PC-3 (cell line): ENCODE measurements at regions of chr4 and their contacts with region 1.

Region 1: GRCh38 chr4:148441986-148442831 is at the start of gene NR3C2:
- DNase-seq: peak; percentile 95
- ATAC-seq: peak; percentile 84
- H3K4me3 ChIP-seq: peak within 1 kb of the TSS; percentile 86
- H3K27ac ChIP-seq: no peak within 1 kb of the TSS
- H3K4me1 ChIP-seq: peaks cover 13% of the 10 kb centered on the region; the same call in 1 of the 2 replicates
- H3K27me3 ChIP-seq: no peaks in the 10 kb centered on the region
- CTCF ChIP-seq: no peak
- total RNA-seq, gene NR3C2: 1.2 and 2.8 TPM in 2 replicates

Region 2: DNA sequence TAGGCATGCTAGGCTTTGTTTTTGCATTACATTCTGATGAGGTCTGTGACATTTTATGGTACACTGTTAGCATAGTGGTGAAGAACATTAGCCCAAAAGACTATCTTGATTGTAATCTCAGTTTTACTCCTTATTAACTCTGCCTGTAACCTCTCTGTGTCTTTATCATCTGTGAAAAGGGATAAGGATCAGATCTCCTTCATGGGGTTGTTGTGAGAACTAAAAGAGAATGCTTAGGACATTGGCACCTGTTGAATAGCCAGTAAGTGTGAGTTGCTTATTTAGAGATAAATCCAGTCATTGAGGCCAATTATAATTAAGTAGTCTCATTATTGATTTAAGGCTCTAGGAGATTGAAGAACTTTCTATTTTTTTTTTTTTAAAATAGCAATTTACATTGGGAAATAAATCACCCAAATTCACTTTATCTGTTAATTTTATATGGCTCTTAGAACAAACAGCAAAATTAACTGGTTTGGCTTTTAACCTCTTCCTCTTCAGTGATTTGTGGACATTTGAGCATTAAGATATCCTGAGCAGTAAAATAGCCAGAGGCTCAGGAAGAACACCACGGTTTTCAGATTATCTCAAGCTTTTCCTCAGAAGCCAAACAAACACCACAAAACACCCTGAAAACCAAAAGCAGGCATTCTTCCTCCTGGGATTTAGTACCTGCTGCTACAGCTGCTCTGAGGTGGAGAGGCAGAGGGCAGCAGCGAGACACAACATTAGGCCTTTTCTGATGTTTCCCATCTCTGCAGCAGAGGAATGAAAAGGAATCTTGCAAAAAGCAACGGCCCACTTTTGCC is 517.4 kb before region 1 on chr4:
- CTCF ChIA-PET with region 1: no interaction called
- POLR2A ChIA-PET with region 1: interaction called, 3 read pairs
- intact Hi-C with region 1: loop called (anchors 5 kb)
- DNase-seq: peak; percentile 38
- ATAC-seq: peak; percentile 20
- H3K4me3 ChIP-seq: no peak overlapping the region
- H3K27ac ChIP-seq: no peak overlapping the region
- H3K4me1 ChIP-seq: peaks cover 27% of the 10 kb centered on the region
- H3K27me3 ChIP-seq: no peaks in the 10 kb centered on the region
- CTCF ChIP-seq: peak; percentile 62

Region 3: DNA sequence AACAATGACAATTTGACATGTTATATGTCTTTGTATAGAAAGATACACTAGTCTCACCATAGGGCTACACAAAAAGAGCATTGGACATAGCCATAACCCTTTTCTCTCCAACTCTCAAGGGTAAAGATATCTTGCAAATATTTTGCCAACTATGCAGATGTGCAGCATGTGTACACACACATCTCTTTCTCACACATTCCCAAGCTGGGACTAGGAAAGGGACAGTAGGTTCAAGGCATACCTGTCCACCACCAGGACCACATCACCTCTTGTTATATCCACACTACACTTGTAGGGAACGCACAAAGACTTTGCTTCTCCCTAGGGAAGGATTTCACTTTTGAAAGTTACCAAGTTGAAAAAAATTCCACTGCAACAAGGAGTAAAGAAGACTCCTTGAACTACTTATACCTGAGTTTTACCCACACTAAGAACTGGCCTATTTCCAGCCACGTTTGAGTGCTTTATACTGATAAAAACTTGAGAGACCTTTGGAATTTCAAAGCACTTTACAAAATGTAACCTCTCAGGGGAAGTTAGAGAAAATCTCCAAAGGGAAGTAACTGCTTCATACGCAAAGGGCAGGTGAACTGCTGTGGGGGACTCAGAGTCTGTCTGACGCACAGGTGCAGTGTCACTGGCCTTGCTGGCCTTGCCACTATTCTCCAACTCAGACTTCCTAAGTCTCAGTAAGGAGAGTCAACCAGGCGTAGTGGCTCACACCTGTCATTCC is 36.9 kb before region 1 on chr4:
- CTCF ChIA-PET with region 1: no interaction called
- POLR2A ChIA-PET with region 1: no interaction called
- intact Hi-C with region 1: no loop called
- DNase-seq: no peak
- ATAC-seq: no peak
- H3K4me3 ChIP-seq: no peak overlapping the region
- H3K27ac ChIP-seq: no peak overlapping the region
- H3K4me1 ChIP-seq: no peaks in the 10 kb centered on the region
- H3K27me3 ChIP-seq: no peaks in the 10 kb centered on the region
- CTCF ChIP-seq: no peak

Region 4: DNA sequence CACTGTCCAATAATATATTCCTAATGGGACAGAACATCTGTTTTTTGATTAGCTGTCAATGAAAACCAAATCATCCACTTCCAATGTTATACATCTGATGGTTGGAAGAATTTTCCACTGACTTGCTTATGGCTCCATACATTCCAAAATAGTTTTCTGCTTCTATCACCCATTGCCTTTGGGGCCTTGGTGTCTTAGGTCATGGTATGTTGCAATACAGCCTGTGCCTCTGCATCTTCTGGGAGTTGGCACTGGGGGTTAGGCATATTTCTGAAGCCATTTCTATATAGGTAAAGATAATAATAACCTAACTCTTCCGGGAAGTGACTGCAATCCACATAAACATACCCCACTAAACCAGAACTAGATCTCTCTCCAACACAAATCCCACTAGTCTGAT is 53.3 kb after region 1 on chr4:
- CTCF ChIA-PET with region 1: no interaction called
- POLR2A ChIA-PET with region 1: no interaction called
- intact Hi-C with region 1: no loop called
- DNase-seq: no peak
- ATAC-seq: no peak
- H3K4me3 ChIP-seq: no peak overlapping the region
- H3K27ac ChIP-seq: no peak overlapping the region
- H3K4me1 ChIP-seq: no peaks in the 10 kb centered on the region
- H3K27me3 ChIP-seq: no peaks in the 10 kb centered on the region
- CTCF ChIP-seq: no peak

Region 5: DNA sequence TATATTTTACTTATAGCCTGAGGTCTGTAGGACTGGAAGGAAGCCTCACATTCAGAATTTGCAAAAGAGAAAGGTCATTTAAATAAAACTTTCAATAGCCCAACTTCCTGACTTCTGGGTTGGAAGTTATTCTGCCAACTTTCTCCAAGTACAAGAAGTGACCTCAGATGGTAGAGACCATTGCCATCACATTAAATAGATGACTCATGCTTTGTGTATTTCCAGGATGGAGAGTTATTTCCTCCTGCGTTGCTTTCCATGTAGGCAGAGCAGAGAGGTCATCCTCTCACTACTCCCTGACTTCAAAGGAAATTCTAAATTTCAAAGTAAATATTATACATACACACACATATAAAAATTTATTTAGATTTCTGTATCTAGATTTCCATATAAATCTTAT is 73.0 kb after region 1 on chr4:
- CTCF ChIA-PET with region 1: no interaction called
- POLR2A ChIA-PET with region 1: no interaction called
- intact Hi-C with region 1: loop called (anchors 1 kb)
- DNase-seq: peak; percentile 88
- ATAC-seq: peak; percentile 90
- H3K4me3 ChIP-seq: peak overlapping the region; percentile 3; the same call in 1 of the 2 replicates
- H3K27ac ChIP-seq: peak overlapping the region; percentile 89
- H3K4me1 ChIP-seq: peaks cover 35% of the 10 kb centered on the region
- H3K27me3 ChIP-seq: no peaks in the 10 kb centered on the region
- CTCF ChIP-seq: no peak

Region 6: DNA sequence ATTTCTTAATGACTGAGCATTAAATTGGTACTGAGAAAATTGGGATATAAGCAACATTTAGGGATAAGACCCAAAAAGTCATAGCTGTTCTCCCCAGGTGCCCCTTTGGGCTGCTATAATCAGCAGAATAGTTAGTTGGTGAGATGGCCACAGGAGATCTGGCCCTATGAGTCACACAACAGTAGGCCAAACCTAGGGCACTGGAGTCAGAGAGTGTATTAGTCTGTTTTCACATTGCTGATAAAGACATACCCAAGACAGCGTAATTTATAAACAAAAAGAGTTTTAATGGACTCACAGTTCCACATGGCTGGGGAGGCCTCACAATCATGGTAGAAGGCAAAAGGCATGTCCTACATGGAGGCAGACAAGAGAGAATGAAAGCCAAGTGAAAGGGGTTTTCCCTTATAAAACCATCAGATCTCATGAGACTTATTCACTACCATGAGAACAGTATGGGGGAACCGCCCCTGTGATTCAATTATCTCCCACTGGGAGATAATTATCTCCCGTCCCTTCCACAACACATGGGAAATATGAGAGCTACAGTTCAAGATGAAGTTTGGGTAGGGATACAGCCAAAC is 338.3 kb after region 1 on chr4:
- CTCF ChIA-PET with region 1: no interaction called
- POLR2A ChIA-PET with region 1: interaction called, 11 read pairs
- intact Hi-C with region 1: no loop called
- DNase-seq: no peak
- ATAC-seq: no peak
- H3K4me3 ChIP-seq: no peak overlapping the region
- H3K27ac ChIP-seq: no peak overlapping the region
- H3K4me1 ChIP-seq: peaks cover 5% of the 10 kb centered on the region; the same call in 1 of the 2 replicates
- H3K27me3 ChIP-seq: no peaks in the 10 kb centered on the region
- CTCF ChIP-seq: no peak

Region 7: GRCh38 chr4:149264093-149264733 is 822.0 kb after region 1 on chr4:
- CTCF ChIA-PET with region 1: no interaction called
- POLR2A ChIA-PET with region 1: no interaction called
- intact Hi-C with region 1: loop called (anchors 5 kb)
- DNase-seq: peak; percentile 61
- ATAC-seq: peak; percentile 77
- H3K4me3 ChIP-seq: no peak overlapping the region
- H3K27ac ChIP-seq: no peak overlapping the region
- H3K4me1 ChIP-seq: no peaks in the 10 kb centered on the region
- H3K27me3 ChIP-seq: no peaks in the 10 kb centered on the region
- CTCF ChIP-seq: peak; percentile 74